ENCODE measurements at regions of chr2 and their contacts with region 1.

Region 1: GRCh38 chr2:162007447-162008040 is 66.5 kb downstream of the DPP4 start:
- DNase-seq: no peak
- H3K4me3 ChIP-seq: no peak overlapping the region
- H3K27ac ChIP-seq: no peak overlapping the region
- H3K4me1 ChIP-seq: no peaks in the 10 kb centered on the region
- H3K27me3 ChIP-seq: no peaks in the 10 kb centered on the region
- CTCF ChIP-seq: peak in 1 of 3 experiments; percentile 50
- POLR2A ChIP-seq: no peak

Region 2: GRCh38 chr2:162113776-162114168 is 106.2 kb after region 1 on chr2:
- intact Hi-C with region 1: no loop called
- DNase-seq: no peak
- H3K4me3 ChIP-seq: no peak overlapping the region
- H3K27ac ChIP-seq: no peak overlapping the region
- H3K4me1 ChIP-seq: peaks cover 24% of the 10 kb centered on the region
- H3K27me3 ChIP-seq: no peaks in the 10 kb centered on the region
- CTCF ChIP-seq: no peak
- POLR2A ChIP-seq: no peak

Region 3: GRCh38 chr2:162123806-162124758 is 116.5 kb after region 1 on chr2:
- intact Hi-C with region 1: loop called (anchors 10 kb)
- DNase-seq: no peak
- H3K4me3 ChIP-seq: no peak overlapping the region
- H3K27ac ChIP-seq: no peak overlapping the region
- H3K4me1 ChIP-seq: peaks cover 4% of the 10 kb centered on the region
- H3K27me3 ChIP-seq: no peaks in the 10 kb centered on the region
- CTCF ChIP-seq: peak; percentile 68 to 83 (median 71)
- POLR2A ChIP-seq: no peak

Region 4: GRCh38 chr2:162261032-162261945 is 253.7 kb after region 1 on chr2:
- intact Hi-C with region 1: no loop called
- DNase-seq: no peak
- H3K4me3 ChIP-seq: no peak overlapping the region
- H3K27ac ChIP-seq: no peak overlapping the region
- H3K4me1 ChIP-seq: peaks cover 18% of the 10 kb centered on the region
- H3K27me3 ChIP-seq: no peaks in the 10 kb centered on the region
- CTCF ChIP-seq: no peak
- POLR2A ChIP-seq: no peak